Calu3 (cell line): ENCODE measurements at regions of chr13 and their contacts with region 1.

Region 1: DNA sequence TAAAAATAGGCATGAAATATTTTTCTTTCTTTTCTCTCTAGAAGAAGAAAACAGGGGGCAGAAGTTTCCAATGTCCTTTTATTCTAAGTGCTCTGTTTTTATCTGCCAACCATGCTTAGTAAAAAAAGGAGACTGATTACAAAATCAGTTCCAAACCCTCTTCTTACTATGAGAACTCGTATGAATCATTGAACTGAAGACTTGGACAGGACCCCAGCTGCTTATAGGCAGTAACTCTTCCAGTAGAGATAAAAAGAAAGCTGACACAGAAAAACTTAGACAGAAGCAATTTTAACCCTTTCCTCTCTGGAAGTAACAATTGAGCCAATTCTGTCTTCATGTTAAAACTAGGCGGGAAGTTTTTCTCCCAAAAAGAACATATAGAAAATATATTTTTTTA is 24.5 kb upstream of the FREM2 start:
- DNase-seq: no peak
- H3K4me3 Mint-ChIP-seq: no peak overlapping the region
- H3K27ac Mint-ChIP-seq: no peak overlapping the region
- H3K4me1 Mint-ChIP-seq: peaks cover 28% of the 10 kb centered on the region
- H3K27me3 Mint-ChIP-seq: no peaks in the 10 kb centered on the region
- CTCF ChIP-seq: no peak

Region 2: DNA sequence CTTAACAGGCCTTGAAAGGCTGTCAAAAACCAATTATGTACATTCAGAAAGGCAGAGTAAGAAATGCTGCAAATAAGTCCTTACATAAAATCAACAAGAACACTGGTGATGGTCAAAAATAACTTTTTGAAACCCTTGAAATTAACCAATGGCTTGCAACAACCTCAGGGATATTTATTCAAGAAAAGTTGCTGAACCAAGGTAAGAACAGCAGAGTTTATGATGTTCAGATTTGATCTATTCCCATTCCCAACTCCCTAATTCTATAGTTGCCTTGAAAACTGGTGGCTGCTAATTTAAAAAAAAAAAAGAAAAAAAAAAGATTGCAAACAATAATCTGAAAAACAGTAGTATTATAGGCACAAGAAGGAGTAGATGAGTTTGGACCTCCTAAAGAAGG is 422.5 kb before region 1 on chr13:
- CTCF ChIA-PET with region 1: no interaction called
- intact Hi-C with region 1: no loop called
- DNase-seq: no peak
- H3K4me3 Mint-ChIP-seq: no peak overlapping the region
- H3K27ac Mint-ChIP-seq: no peak overlapping the region
- H3K4me1 Mint-ChIP-seq: no peaks in the 10 kb centered on the region
- H3K27me3 Mint-ChIP-seq: no peaks in the 10 kb centered on the region
- CTCF ChIP-seq: no peak

Region 3: DNA sequence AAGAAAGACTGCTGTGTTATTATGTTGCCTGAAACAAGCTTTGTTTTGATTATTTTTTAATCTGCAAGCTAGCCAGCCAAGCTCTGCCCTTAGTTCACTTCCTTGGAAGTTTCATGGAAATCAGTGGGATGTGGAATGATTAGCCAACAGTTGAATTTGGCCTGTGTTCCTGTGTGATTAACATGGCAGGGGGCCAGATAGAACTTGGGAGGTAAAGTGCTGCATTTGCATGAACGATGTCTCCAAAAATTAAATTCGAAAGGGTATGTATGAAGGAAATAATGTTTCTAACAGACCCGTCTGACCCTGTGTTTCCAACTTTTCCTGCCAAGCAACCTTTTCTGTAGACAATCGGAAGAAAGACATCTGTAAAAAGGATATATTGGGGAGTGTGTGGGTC is 280.5 kb before region 1 on chr13:
- CTCF ChIA-PET with region 1: no interaction called
- intact Hi-C with region 1: no loop called
- DNase-seq: no peak
- H3K4me3 Mint-ChIP-seq: no peak overlapping the region
- H3K27ac Mint-ChIP-seq: no peak overlapping the region
- H3K4me1 Mint-ChIP-seq: no peaks in the 10 kb centered on the region
- H3K27me3 Mint-ChIP-seq: no peaks in the 10 kb centered on the region
- CTCF ChIP-seq: no peak

Region 4: GRCh38 chr13:38872693-38873092 is 210.3 kb after region 1 on chr13:
- CTCF ChIA-PET with region 1: interaction called, 12 read pairs
- intact Hi-C with region 1: no loop called
- DNase-seq: peak; percentile 57
- H3K4me3 Mint-ChIP-seq: no peak overlapping the region
- H3K27ac Mint-ChIP-seq: no peak overlapping the region
- H3K4me1 Mint-ChIP-seq: no peaks in the 10 kb centered on the region
- H3K27me3 Mint-ChIP-seq: no peaks in the 10 kb centered on the region
- CTCF ChIP-seq: no peak

Region 5: DNA sequence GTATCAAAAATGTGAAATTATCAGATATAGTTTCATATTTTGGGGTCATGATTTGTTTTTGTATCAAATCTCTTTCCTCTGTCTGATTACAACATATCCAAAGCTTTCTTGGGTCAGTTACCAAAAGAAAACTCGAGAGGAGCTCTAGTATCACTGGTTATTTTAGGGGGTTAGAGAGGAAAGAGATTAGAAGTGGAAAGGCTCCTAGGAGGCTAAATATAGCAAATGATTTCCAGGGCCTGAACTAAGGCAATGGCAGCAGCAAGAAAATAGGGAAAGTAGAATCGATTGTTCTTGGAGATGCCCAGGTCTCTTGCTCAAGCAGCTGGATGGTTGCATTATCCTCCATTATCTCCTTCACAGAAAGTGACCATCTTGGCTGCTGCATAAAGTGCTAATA is 448.8 kb after region 1 on chr13:
- CTCF ChIA-PET with region 1: no interaction called
- intact Hi-C with region 1: no loop called
- DNase-seq: no peak
- H3K4me3 Mint-ChIP-seq: no peak overlapping the region
- H3K27ac Mint-ChIP-seq: no peak overlapping the region
- H3K4me1 Mint-ChIP-seq: no peaks in the 10 kb centered on the region
- H3K27me3 Mint-ChIP-seq: peaks cover 22% of the 10 kb centered on the region
- CTCF ChIP-seq: no peak